Tibial artery (tissue), 4 donors: ENCODE measurements at regions of chr6 and their contacts with region 1.

Region 1: GRCh38 chr6:30556066-30556905 is at the start of gene GNL1:
- DNase-seq: peak; percentile 90 to 95
- H3K4me3 ChIP-seq: peak within 1 kb of the TSS; percentile 85
- H3K27ac ChIP-seq: peak within 1 kb of the TSS; percentile 98 to 100
- H3K4me1 ChIP-seq: peaks cover 0 to 28% (median 18%) of the 10 kb centered on the region in 4 donors
- H3K27me3 ChIP-seq: no peaks in the 10 kb centered on the region
- CTCF ChIP-seq: no peak

Region 2: GRCh38 chr6:28553986-28554881 is 2002.1 kb before region 1 on chr6:
- intact Hi-C with region 1: no loop called
- DNase-seq: no peak
- H3K4me3 ChIP-seq: no peak overlapping the region
- H3K27ac ChIP-seq: no peak overlapping the region
- H3K4me1 ChIP-seq: no peaks in the 10 kb centered on the region
- H3K27me3 ChIP-seq: peaks cover 0 to 13% of the 10 kb centered on the region in 2 donors
- CTCF ChIP-seq: no peak

Region 3: GRCh38 chr6:30515932-30516753 is 40.1 kb before region 1 on chr6:
- intact Hi-C with region 1: no loop called
- DNase-seq: peak; percentile 94
- H3K4me3 ChIP-seq: peak overlapping the region; percentile 44 to 57
- H3K27ac ChIP-seq: peak overlapping the region; percentile 64 to 80
- H3K4me1 ChIP-seq: peaks cover 0 to 3% (median 0%) of the 10 kb centered on the region in 4 donors
- H3K27me3 ChIP-seq: no peaks in the 10 kb centered on the region
- CTCF ChIP-seq: no peak

Region 4: DNA sequence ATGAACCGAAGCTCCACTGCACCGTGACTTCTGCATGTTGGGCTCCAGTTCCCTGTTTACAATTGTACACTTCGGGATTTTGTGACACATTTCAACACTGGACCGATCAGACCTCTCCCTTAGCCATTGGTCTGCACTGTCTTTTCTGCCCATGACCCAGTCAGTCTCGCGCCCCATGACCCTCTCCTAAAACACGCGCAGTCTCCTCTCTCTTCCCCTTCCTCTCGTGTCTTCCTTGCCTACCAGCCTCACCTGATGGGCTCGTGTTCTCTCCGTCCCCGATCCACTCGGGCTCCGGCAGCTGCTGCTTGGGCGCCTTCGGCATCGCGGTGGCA is 14.4 kb after region 1 on chr6:
- intact Hi-C with region 1: loop called (anchors 1 kb)
- DNase-seq: peak in 1 of 2 donors; percentile 39
- H3K4me3 ChIP-seq: peak overlapping the region; percentile 62 to 73
- H3K27ac ChIP-seq: peak overlapping the region; percentile 83 to 87
- H3K4me1 ChIP-seq: peaks cover 4 to 35% (median 27%) of the 10 kb centered on the region in 4 donors
- H3K27me3 ChIP-seq: no peaks in the 10 kb centered on the region
- CTCF ChIP-seq: no peak

Region 5: DNA sequence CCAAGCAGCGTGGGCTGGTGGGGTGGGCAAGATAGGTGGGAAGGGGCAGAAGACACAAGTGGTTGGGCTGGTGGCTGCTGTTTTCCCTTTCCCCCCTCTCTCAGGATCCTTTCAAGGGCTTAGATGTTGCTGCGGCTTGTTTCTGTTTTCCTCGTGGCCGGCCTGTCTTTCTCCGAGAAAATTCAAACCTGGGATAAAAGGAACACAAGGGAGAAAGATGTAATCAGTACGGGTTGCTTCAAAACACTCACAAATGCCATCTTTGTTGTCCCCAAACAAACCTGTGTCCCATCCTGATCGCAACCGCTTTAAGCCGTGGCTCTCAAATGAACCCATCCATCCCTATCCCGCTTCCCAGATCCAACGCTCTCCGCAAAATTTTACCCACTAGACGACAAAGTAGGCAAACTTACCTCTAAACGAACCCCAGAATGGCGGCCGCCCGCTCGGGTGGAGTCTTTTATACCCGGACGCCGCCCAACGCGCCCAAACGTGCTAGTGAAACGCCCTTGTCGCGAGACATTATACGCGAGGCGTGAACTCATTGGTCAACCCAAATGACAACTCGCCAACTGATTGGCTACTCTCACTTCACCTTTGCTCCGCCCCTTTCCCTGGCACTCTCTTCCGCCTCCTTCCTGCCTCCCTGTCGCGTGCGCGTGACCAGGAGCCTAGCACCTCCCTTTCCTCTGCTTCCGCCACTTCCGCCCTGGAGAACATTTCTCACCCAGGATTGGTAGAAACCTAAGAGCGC is 60.7 kb after region 1 on chr6 and contains the start of gene PPP1R10:
- intact Hi-C with region 1: loop called (anchors 5 kb)
- DNase-seq: peak; percentile 99 to 100
- H3K4me3 ChIP-seq: peak within 1 kb of the TSS; percentile 87 to 90
- H3K27ac ChIP-seq: peak within 1 kb of the TSS; percentile 96 to 98
- H3K4me1 ChIP-seq: peaks cover 0 to 38% (median 30%) of the 10 kb centered on the region in 4 donors
- H3K27me3 ChIP-seq: no peaks in the 10 kb centered on the region
- CTCF ChIP-seq: no peak